PC-3 (cell line): ENCODE measurements at regions of chr12 and their contacts with region 1.

Region 1: DNA sequence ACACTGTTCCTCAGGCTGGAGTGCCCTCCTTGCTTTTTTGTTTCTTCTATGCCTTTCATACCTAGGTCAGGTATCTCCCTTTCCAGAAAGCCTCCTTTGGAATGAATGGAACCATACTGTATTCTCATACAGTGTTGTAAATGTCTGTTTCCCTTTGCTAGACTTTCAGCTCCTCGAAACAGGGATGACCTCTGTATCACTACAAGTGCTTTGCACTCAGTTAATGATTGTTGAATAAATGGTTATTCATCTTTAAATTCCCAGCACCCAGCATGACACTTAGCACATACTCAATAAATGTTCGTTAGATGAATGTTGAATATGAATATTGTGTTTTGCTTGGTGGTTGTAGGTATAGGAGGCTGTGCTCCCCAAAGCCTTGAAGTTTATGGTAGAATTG is 5.9 kb upstream of the TULP3 start:
- DNase-seq: no peak
- ATAC-seq: no peak
- H3K4me3 ChIP-seq: no peak overlapping the region
- H3K27ac ChIP-seq: no peak overlapping the region
- H3K4me1 ChIP-seq: no peaks in the 10 kb centered on the region
- H3K27me3 ChIP-seq: no peaks in the 10 kb centered on the region
- CTCF ChIP-seq: no peak

Region 2: GRCh38 chr12:2382370-2383155 is 502.2 kb before region 1 on chr12:
- CTCF ChIA-PET with region 1: no interaction called
- POLR2A ChIA-PET with region 1: no interaction called
- intact Hi-C with region 1: no loop called
- DNase-seq: no peak
- ATAC-seq: no peak
- H3K4me3 ChIP-seq: no peak overlapping the region
- H3K27ac ChIP-seq: no peak overlapping the region
- H3K4me1 ChIP-seq: no peaks in the 10 kb centered on the region
- H3K27me3 ChIP-seq: peaks cover 59% of the 10 kb centered on the region
- CTCF ChIP-seq: no peak

Region 3: DNA sequence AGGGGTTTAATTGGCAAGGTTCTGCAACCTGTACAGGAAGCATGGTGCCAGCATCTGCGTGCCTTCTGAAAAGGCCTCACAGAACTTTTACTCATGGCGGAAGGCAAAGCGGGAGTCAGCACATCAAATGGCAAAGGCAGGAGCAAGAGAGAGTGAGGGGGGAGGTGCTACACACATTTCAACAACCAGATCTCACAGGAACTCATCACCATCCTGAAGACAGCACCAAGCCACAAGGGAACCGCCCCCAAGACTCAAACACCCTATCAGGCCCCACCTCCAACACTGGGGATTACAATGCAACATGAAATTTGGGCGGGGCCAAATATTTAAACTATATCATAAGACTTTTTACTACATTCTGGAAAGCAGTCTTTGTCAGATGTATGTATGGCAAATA is 128.1 kb before region 1 on chr12:
- CTCF ChIA-PET with region 1: no interaction called
- POLR2A ChIA-PET with region 1: no interaction called
- intact Hi-C with region 1: no loop called
- DNase-seq: no peak
- ATAC-seq: no peak
- H3K4me3 ChIP-seq: no peak overlapping the region
- H3K27ac ChIP-seq: no peak overlapping the region
- H3K4me1 ChIP-seq: no peaks in the 10 kb centered on the region
- H3K27me3 ChIP-seq: peaks cover 41% of the 10 kb centered on the region
- CTCF ChIP-seq: no peak

Region 4: DNA sequence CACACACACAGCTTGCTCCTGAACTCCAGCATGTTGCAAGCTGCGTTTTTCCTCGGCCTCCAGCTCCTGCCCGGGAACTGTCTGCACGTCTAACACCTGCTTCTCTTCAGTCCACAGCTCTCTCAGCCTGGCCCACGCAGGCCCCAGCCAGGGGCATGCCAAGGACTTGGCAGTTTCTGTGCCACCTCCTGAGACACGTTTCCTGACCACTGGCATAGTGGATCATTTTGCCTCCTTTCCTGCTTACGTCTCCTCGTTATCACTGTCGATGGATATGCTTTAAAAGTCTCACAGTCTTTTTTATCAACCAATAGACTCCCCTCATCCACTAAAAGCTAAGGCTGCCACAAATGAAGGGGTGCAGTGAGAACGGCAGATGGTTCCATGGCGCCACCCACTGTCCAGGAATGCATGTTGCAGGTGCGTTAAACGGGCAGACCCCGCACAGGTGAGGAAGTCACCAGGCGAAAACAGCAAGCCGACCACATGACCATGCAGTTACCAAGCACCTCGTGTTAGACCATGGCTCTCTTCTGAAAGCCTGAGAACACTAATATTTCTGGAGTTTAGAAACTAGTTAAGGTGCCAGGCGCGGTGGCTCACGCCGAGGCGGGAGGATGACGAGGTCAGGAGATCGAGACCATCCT is 59.7 kb after region 1 on chr12:
- CTCF ChIA-PET with region 1: interaction called, 8 read pairs
- POLR2A ChIA-PET with region 1: no interaction called
- intact Hi-C with region 1: loop called (anchors 1 kb)
- DNase-seq: peak; percentile 56
- ATAC-seq: peak; percentile 70
- H3K4me3 ChIP-seq: no peak overlapping the region
- H3K27ac ChIP-seq: no peak overlapping the region
- H3K4me1 ChIP-seq: no peaks in the 10 kb centered on the region
- H3K27me3 ChIP-seq: no peaks in the 10 kb centered on the region
- CTCF ChIP-seq: peak; percentile 88

Region 5: GRCh38 chr12:3041558-3042164 is 156.9 kb after region 1 on chr12:
- CTCF ChIA-PET with region 1: no interaction called
- POLR2A ChIA-PET with region 1: no interaction called
- intact Hi-C with region 1: loop called (anchors 5 kb)
- DNase-seq: peak; percentile 85
- ATAC-seq: peak; percentile 91
- H3K4me3 ChIP-seq: no peak overlapping the region
- H3K27ac ChIP-seq: no peak overlapping the region
- H3K4me1 ChIP-seq: no peaks in the 10 kb centered on the region; the same call in 1 of the 2 replicates
- H3K27me3 ChIP-seq: no peaks in the 10 kb centered on the region
- CTCF ChIP-seq: peak; percentile 64